ENCODE measurements at regions of chr10 and their contacts with region 1.

Region 1: GRCh38 chr10:132536971-132537712 is 445 bp upstream of the INPP5A start:
- DNase-seq: peak; percentile 99 to 100 (median 100)
- ATAC-seq: peak; percentile 84
- H3K4me3 ChIP-seq: peak overlapping the region; percentile 41
- H3K4me3 Mint-ChIP-seq: peak overlapping the region; percentile 92
- H3K27ac ChIP-seq: peak overlapping the region in 1 of 2 donors; percentile 43
- H3K27ac Mint-ChIP-seq: peak overlapping the region; percentile 81
- H3K4me1 ChIP-seq: peaks cover 56% of the 10 kb centered on the region
- H3K4me1 Mint-ChIP-seq: peaks cover 46% of the 10 kb centered on the region
- H3K27me3 ChIP-seq: no peaks in the 10 kb centered on the region
- H3K27me3 Mint-ChIP-seq: no peaks in the 10 kb centered on the region
- CTCF ChIP-seq: no peak

Region 2: GRCh38 chr10:131900350-131901146 is 636.6 kb before region 1 on chr10 and contains the start of gene PPP2R2D:
- CTCF ChIA-PET with region 1: no interaction called
- POLR2A ChIA-PET with region 1: no interaction called
- intact Hi-C with region 1: loop called in 1 of 2 experiments (anchors 5 kb)
- DNase-seq: peak; percentile 89 to 98 (median 95)
- ATAC-seq: peak; percentile 81
- H3K4me3 ChIP-seq: peak within 1 kb of the TSS; percentile 73
- H3K4me3 Mint-ChIP-seq: peak within 1 kb of the TSS; percentile 97
- H3K27ac ChIP-seq: peak within 1 kb of the TSS; percentile 66 to 82
- H3K27ac Mint-ChIP-seq: peak within 1 kb of the TSS; percentile 96
- H3K4me1 ChIP-seq: peaks cover 65% of the 10 kb centered on the region
- H3K4me1 Mint-ChIP-seq: peaks cover 61% of the 10 kb centered on the region
- H3K27me3 ChIP-seq: no peaks in the 10 kb centered on the region
- H3K27me3 Mint-ChIP-seq: no peaks in the 10 kb centered on the region
- CTCF ChIP-seq: no peak
- total RNA-seq, gene PPP2R2D: 32.6 to 32.9 TPM

Region 3: DNA sequence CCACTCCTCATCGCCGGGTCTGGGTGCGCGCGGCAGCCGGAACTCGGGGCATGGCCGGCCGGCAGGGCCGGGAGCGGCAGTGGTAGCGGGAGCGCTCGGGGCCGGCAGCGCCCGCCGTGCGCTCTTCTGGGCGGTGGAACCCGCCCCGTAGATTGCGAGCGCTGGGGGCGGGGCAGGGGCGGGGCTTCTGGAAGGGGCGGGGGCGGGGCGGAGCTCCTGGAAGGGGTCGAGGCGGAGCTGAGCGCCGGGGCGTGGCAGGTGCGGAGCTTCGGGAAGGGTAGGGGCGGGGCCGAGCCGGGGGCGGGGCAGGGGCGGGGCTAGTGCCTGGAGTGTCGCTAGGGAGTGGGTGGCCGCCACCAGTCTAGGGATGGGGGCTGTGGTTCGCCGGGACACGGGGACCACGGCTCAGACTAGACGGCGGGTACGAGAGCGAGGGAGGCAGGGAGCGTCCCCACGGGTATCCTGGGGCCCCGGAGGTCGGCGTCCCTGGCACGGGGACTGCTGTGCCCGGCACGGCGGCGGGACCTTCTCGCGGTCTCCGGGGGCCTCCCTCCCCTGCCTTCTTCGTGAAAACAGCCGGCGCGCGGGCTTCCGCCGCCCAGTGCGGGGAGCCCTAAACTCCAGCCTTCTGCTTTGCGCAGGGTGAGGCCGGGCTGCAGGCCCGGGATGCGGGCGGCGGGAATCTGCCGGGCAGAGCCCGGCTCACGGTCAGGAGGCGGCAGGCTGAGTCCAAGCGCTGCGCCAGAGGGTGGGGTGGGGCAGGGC is 229.1 kb before region 1 on chr10 and contains the start of gene STK32C:
- CTCF ChIA-PET with region 1: no interaction called
- POLR2A ChIA-PET with region 1: no interaction called
- intact Hi-C with region 1: loop called in 1 of 2 experiments (anchors 5 kb)
- DNase-seq: peak; percentile 86 to 99 (median 90)
- ATAC-seq: peak; percentile 85
- H3K4me3 ChIP-seq: peak within 1 kb of the TSS; percentile 69
- H3K4me3 Mint-ChIP-seq: peak within 1 kb of the TSS; percentile 93
- H3K27ac ChIP-seq: no peak within 1 kb of the TSS
- H3K27ac Mint-ChIP-seq: peak within 1 kb of the TSS; percentile 61
- H3K4me1 ChIP-seq: peaks cover 16% of the 10 kb centered on the region
- H3K4me1 Mint-ChIP-seq: peaks cover 13% of the 10 kb centered on the region
- H3K27me3 ChIP-seq: no peaks in the 10 kb centered on the region
- H3K27me3 Mint-ChIP-seq: no peaks in the 10 kb centered on the region
- CTCF ChIP-seq: no peak
- total RNA-seq, gene STK32C: 4.9 to 5.2 TPM

Region 4: GRCh38 chr10:132396495-132397035 is 140.6 kb before region 1 on chr10:
- CTCF ChIA-PET with region 1: no interaction called
- POLR2A ChIA-PET with region 1: interaction called, 3 read pairs
- intact Hi-C with region 1: loop called (anchors 2 to 10 kb)
- DNase-seq: peak; percentile 45 to 89 (median 66)
- ATAC-seq: peak; percentile 77
- H3K4me3 ChIP-seq: peak overlapping the region; percentile 38
- H3K4me3 Mint-ChIP-seq: no peak overlapping the region
- H3K27ac ChIP-seq: no peak overlapping the region
- H3K27ac Mint-ChIP-seq: no peak overlapping the region
- H3K4me1 ChIP-seq: peaks cover 41% of the 10 kb centered on the region
- H3K4me1 Mint-ChIP-seq: peaks cover 24% of the 10 kb centered on the region
- H3K27me3 ChIP-seq: no peaks in the 10 kb centered on the region
- H3K27me3 Mint-ChIP-seq: no peaks in the 10 kb centered on the region
- CTCF ChIP-seq: no peak

Region 5: GRCh38 chr10:132458593-132459300 is 78.4 kb before region 1 on chr10:
- CTCF ChIA-PET with region 1: no interaction called
- POLR2A ChIA-PET with region 1: no interaction called
- intact Hi-C with region 1: loop called (anchors 2 to 5 kb)
- DNase-seq: peak; percentile 43 to 83 (median 64)
- ATAC-seq: peak; percentile 94
- H3K4me3 ChIP-seq: no peak overlapping the region
- H3K4me3 Mint-ChIP-seq: no peak overlapping the region
- H3K27ac ChIP-seq: no peak overlapping the region
- H3K27ac Mint-ChIP-seq: no peak overlapping the region
- H3K4me1 ChIP-seq: peaks cover 8% of the 10 kb centered on the region
- H3K4me1 Mint-ChIP-seq: no peaks in the 10 kb centered on the region
- H3K27me3 ChIP-seq: no peaks in the 10 kb centered on the region
- H3K27me3 Mint-ChIP-seq: no peaks in the 10 kb centered on the region
- CTCF ChIP-seq: peak; percentile 88

Region 6: DNA sequence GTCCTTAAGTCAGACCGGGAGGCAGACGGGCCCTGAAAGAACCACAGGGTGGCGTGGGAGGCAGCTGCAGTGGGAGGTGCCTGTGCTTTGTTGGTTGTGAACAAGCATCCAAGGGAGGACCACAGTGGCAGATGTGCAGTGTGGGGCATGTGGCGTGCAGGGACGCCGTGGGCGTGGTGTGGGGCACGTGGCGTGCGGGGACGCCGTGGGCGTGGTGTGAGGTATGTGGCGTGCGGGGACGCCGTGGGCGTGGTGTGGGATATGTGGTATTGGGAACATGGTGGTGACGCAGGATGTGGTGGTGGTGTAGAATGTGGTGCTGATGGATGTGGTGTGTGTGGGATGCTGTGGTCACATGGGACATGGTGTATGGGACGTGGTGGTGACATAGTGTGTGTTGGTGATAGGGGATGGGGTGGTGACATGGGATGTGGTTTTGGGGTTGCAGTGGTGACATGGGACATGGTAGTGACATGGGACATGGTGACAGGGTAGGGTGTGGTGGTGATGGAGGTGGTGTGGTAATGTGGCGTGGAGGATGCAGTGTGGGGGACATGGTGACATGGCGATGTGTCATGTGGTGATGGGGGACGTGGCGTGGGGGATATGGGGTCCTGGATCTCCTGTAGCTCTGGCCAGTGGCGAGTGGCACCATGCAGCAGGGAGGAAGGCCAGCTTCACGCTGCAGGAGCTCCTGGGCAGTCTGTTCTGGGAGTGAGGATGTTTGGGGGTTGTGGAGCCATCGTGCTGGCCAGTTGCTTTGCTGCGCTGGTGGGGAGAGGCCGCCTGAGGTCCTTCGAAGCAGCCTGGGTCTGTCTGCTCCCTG is 79.2 kb after region 1 on chr10:
- CTCF ChIA-PET with region 1: no interaction called
- POLR2A ChIA-PET with region 1: no interaction called
- intact Hi-C with region 1: loop called in 1 of 2 experiments (anchors 5 kb)
- DNase-seq: peak in 13 of 14 experiments; percentile 19 to 85 (median 34)
- ATAC-seq: peak; percentile 90
- H3K4me3 ChIP-seq: no peak overlapping the region
- H3K4me3 Mint-ChIP-seq: peak overlapping the region; percentile 8
- H3K27ac ChIP-seq: no peak overlapping the region
- H3K27ac Mint-ChIP-seq: peak overlapping the region; percentile 75
- H3K4me1 ChIP-seq: peaks cover 33% of the 10 kb centered on the region
- H3K4me1 Mint-ChIP-seq: peaks cover 25% of the 10 kb centered on the region
- H3K27me3 ChIP-seq: no peaks in the 10 kb centered on the region
- H3K27me3 Mint-ChIP-seq: no peaks in the 10 kb centered on the region
- CTCF ChIP-seq: no peak

Region 7: DNA sequence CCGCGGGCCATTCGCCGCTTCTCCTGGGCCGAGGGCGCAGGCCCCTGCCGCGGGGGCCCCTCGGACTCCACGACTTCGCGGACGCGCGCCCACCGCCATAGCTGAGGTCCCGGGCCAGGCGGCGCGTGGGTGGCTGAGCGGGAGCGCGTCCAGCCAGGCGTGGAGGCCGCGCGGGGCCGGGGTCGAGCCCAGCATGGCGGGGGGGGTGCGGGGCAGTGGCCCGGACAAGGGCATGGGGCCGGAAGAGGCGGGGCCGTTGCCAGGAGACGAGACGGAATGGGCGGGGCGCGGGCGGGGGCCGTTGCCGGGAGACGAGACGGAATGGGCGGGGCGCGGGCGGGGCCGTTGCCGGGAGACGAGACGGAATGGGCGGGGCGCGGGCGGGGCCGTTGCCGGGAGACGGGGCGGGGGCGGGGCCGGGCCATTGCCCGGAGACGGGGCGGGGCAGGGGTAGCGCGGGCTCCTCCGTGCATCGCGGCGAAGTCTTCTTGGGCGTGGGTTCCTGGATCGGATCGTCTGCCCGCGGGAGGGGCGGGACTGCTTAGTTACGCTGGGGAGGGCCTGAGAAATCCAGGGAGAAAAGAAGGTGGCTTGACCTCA is 724.7 kb after region 1 on chr10:
- CTCF ChIA-PET with region 1: no interaction called
- POLR2A ChIA-PET with region 1: no interaction called
- intact Hi-C with region 1: loop called in 1 of 2 experiments (anchors 5 kb)
- DNase-seq: peak; percentile 75 to 91 (median 85)
- ATAC-seq: peak; percentile 27
- H3K4me3 ChIP-seq: peak overlapping the region; percentile 55
- H3K4me3 Mint-ChIP-seq: peak overlapping the region; percentile 82
- H3K27ac ChIP-seq: peak overlapping the region; percentile 63 to 71
- H3K27ac Mint-ChIP-seq: peak overlapping the region; percentile 99
- H3K4me1 ChIP-seq: peaks cover 93% of the 10 kb centered on the region
- H3K4me1 Mint-ChIP-seq: peaks cover 80% of the 10 kb centered on the region
- H3K27me3 ChIP-seq: no peaks in the 10 kb centered on the region
- H3K27me3 Mint-ChIP-seq: peaks cover 5% of the 10 kb centered on the region
- CTCF ChIP-seq: no peak

Measured in CD4-positive, alpha-beta T cell (primary cell).